AG04450 (cell line): ENCODE measurements at regions of chr1 and their contacts with region 1.

Region 1: DNA sequence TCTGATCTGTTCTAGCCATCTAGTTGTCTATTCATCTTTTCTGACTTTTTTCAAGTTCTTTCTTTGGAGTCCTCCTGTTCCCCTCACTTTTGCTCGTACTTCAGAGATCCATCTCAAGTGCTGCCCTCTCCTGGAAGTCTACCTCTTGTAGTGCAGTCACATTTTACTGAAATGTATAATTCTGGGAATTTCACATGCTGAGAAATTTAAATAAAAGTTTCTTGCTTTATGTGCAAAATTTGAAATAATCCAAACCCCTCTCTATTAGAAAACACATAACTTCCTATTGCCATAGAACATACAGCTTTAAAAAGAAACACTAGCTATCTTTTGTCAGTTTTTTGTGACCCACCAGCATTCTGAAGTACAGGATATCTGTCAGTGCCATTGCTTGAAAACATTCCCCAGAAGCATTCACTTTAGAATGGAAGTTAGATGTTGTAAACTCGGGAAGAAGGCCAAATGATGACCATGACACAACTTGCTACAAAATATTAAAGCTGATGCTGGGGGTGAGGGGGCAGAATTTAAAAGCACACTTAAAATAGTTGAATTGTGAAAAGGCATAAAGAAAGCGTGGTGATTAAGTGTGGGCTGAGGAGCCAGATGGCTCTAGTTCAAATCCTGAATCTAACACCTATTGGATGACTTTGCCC is 22.0 kb downstream of the RLF start:
- DNase-seq: no peak
- H3K4me3 ChIP-seq: no peak overlapping the region
- H3K27ac ChIP-seq: no peak overlapping the region
- H3K27me3 ChIP-seq: no peaks in the 10 kb centered on the region
- CTCF ChIP-seq: peak; percentile 52

Region 2: DNA sequence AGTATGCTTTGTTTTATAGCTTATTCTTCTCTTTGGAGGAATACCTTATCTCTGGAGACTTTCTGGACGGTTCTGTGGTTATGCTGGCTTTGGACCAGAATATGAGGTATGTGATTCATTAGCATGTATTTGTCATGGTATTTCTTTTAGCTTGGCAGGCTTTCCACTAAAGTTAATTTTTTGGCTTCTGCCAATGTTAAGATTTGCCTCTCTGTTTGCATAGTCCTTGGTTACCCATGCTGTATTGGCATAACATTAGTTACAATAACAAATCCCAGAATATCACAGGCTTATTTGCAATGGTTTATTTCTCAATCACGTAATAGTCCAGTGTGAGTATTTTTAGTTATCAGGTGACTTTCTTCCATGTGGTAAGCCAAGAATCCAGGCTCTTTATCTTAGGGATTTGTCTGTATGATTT is 84.6 kb after region 1 on chr1:
- CTCF ChIA-PET with region 1: interaction called, 12 read pairs
- POLR2A ChIA-PET with region 1: no interaction called
- DNase-seq: peak; percentile 87
- H3K4me3 ChIP-seq: no peak overlapping the region
- H3K27ac ChIP-seq: no peak overlapping the region
- H3K27me3 ChIP-seq: no peaks in the 10 kb centered on the region
- CTCF ChIP-seq: no peak